ENCODE measurements at regions of chr4 and their contacts with region 1.

Region 1: GRCh38 chr4:41661442-41662076 is 87.0 kb downstream of the PHOX2B start:
- DNase-seq: peak; percentile 31
- ATAC-seq: peak; percentile 86
- H3K4me3 ChIP-seq: no peak overlapping the region
- H3K27ac ChIP-seq: no peak overlapping the region
- H3K4me1 ChIP-seq: peaks cover 0 to 6% of the 10 kb centered on the region in 2 experiments; a peak in 1 of 4 replicates
- H3K27me3 ChIP-seq: no peaks in the 10 kb centered on the region
- CTCF ChIP-seq: peak; percentile 70 to 96 (median 90)
- POLR2A ChIP-seq: no peak
- RAD21 ChIP-seq: peak; percentile 90

Region 2: DNA sequence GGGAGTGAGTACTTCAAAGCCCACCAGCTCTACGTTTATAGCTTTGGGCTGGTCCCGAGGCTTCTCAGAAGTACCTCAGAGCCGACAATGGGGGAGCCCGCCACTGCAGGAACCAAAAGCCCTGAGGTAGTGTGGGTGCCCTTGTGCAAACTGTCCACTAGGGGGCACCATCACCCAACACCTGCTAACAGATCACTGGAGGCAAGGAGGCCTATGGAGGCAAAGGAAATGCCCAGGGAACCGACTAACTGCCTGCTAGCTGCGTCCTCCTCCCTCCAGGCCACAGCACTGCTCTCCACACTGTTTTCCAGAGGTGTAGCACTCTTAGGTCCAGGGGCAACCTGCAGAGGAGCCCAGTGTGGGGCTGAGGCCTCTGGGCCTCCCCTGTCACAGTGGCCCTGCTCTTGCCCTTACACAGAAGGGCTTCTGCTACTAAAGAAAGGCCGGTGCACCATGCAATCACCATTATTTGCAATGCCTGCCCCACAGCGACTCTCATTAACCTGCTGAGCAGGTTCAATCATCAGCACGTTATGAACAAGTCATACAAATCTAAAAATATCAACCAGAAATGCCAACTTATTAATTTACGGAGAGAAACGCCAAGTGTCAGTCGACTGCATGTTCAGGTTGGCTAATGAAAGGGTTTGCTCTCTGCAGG is 752.7 kb before region 1 on chr4:
- CTCF ChIA-PET with region 1: interaction called, 6 read pairs
- POLR2A ChIA-PET with region 1: no interaction called
- RAD21 ChIA-PET with region 1: no interaction called
- intact Hi-C with region 1: loop called (anchors 10 kb)
- DNase-seq: peak; percentile 86
- ATAC-seq: peak; percentile 89
- H3K4me3 ChIP-seq: peak overlapping the region; percentile 15 to 49
- H3K27ac ChIP-seq: peak overlapping the region; percentile 78
- H3K4me1 ChIP-seq: peaks cover 33 to 40% of the 10 kb centered on the region in 2 experiments
- H3K27me3 ChIP-seq: no peaks in the 10 kb centered on the region
- CTCF ChIP-seq: peak in 2 of 3 experiments; percentile 98; a peak in 4 of 6 replicates
- POLR2A ChIP-seq: no peak
- RAD21 ChIP-seq: no peak

Region 3: DNA sequence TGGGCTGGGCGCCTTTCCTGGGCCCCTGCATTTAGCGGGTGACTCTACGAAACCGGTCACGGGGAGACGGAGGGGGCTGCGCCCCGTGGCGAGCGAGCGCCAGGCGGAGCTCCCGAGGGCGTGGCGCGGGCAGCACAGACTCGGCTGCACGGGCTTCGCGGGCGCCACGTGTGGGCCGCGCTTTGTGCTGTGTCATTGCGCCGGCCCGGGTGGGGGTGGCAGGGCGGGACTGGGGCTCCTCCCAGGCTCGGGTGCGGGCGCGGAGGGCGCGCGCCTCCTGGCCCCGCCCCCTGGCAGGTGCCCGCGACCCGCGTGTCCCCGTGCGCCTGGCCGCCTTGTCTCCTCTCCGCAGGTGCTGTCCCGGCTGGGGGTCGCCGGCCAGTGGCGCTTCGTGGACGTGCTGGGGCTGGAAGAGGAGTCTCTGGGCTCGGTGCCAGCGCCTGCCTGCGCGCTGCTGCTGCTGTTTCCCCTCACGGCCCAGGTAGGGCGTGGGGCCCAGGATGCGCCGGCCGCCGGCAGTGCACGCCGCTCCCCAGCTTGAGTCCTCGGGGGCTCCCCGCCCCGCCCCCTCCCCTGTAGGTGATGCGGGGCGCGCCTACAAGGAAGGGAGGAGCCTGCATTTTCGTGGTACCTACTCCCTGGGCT is 404.2 kb before region 1 on chr4:
- CTCF ChIA-PET with region 1: interaction called, 24 read pairs
- POLR2A ChIA-PET with region 1: no interaction called
- RAD21 ChIA-PET with region 1: no interaction called
- intact Hi-C with region 1: no loop called
- DNase-seq: no peak
- ATAC-seq: no peak
- H3K4me3 ChIP-seq: no peak overlapping the region
- H3K27ac ChIP-seq: no peak overlapping the region
- H3K4me1 ChIP-seq: peaks cover 0 to 8% of the 10 kb centered on the region in 2 experiments; a peak in 2 of 4 replicates
- H3K27me3 ChIP-seq: no peaks in the 10 kb centered on the region
- CTCF ChIP-seq: no peak
- POLR2A ChIP-seq: no peak
- RAD21 ChIP-seq: no peak

Measured in HCT116 (cell line).